ENCODE measurements at regions of chr3 and their contacts with region 1.

Region 1: GRCh38 chr3:9503283-9503682 is 50.3 kb downstream of the LHFPL4 start:
- DNase-seq: peak; percentile 74
- H3K4me3 ChIP-seq: no peak overlapping the region
- H3K27ac ChIP-seq: no peak overlapping the region
- H3K4me1 ChIP-seq: peaks cover 7% of the 10 kb centered on the region
- H3K27me3 ChIP-seq: peaks cover 8% of the 10 kb centered on the region
- CTCF ChIP-seq: peak; percentile 91

Region 2: DNA sequence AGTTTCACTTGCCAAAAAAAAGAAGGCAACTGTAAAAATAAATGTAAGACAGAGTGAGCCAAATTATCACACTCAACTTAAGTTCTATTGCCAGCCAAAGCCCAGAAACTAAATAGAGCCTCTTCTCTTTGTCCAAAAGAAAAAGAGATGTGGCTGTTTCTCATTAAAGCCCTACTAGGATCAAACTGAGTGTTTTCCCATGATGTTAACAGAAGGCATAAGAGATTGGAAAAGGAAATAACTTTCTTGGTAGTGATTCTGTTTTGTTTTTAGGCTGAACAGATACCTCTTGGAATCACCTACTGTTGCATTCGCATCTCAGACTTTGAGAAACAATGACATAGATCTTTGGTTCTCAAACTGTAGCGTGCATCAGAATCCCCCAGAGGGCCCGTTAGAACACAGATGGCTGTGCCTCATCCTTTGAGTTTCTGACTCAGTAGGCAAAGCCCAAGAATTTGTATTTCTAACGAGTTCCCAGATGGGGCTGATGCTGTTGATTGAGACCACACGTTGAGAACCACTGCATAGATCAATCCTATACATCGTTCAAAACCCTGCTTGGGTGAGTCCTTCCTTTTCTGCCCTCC is 211.4 kb before region 1 on chr3:
- CTCF ChIA-PET with region 1: no interaction called
- POLR2A ChIA-PET with region 1: no interaction called
- intact Hi-C with region 1: no loop called
- DNase-seq: no peak
- H3K4me3 ChIP-seq: no peak overlapping the region
- H3K27ac ChIP-seq: no peak overlapping the region
- H3K4me1 ChIP-seq: no peaks in the 10 kb centered on the region
- H3K27me3 ChIP-seq: peaks cover 20% of the 10 kb centered on the region
- CTCF ChIP-seq: no peak

Region 3: GRCh38 chr3:9352917-9353752 is 150.1 kb before region 1 on chr3:
- CTCF ChIA-PET with region 1: no interaction called
- POLR2A ChIA-PET with region 1: no interaction called
- intact Hi-C with region 1: loop called (anchors 1 kb)
- DNase-seq: peak; percentile 68
- H3K4me3 ChIP-seq: no peak overlapping the region
- H3K27ac ChIP-seq: no peak overlapping the region
- H3K4me1 ChIP-seq: no peaks in the 10 kb centered on the region
- H3K27me3 ChIP-seq: no peaks in the 10 kb centered on the region
- CTCF ChIP-seq: peak; percentile 91

Region 4: DNA sequence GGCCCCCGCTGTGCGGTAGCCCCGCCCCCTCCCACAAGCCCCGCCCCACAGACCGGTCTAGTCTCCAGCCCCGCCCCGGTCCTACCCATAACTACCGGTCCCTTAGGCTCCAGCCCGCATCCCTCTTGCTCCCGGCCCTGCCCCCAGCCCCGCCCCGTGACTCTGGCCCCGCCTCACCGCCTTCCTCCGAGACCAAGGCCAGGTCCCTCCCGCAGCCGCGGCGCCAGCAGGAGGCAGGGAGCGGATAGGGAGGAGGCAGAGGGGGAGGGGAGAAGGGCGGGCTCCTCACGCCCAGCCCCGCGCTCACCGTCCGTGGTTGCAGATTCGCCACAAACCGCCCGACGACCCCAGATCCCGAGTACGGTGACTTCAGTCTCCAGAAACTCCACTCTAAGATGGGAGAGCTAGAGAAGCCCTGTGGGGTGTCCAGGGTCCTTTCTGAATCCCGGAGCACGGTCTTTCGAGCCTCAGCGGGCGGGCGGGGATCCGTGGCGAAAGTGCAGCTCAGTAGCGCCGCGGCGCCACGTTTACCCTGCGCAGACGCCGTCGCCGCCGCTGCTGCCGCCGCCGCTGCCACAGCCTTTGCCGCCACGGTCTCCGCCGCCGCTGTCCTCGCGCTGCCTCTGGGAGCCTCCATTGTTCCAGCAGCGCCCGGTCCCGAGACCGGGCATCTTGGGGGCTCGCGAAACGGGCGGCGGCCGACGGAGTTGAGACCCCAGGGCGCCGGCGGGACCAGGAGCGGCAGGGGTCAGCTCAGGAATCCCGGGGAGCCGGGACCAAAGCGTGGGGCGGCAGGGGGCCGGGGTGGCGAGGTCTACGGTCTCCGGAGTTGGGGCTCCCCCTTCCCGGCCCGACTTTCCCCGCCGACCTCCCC is 228.2 kb after region 1 on chr3 and contains the start of gene BRPF1:
- CTCF ChIA-PET with region 1: no interaction called
- POLR2A ChIA-PET with region 1: no interaction called
- intact Hi-C with region 1: loop called (anchors 10 kb)
- DNase-seq: peak; percentile 100
- H3K4me3 ChIP-seq: peak within 1 kb of the TSS; percentile 100
- H3K27ac ChIP-seq: peak within 1 kb of the TSS; percentile 99
- H3K4me1 ChIP-seq: peaks cover 12% of the 10 kb centered on the region
- H3K27me3 ChIP-seq: no peaks in the 10 kb centered on the region
- CTCF ChIP-seq: no peak
- total RNA-seq, gene BRPF1: 30.7 and 32.0 TPM in 2 replicates

Region 5: DNA sequence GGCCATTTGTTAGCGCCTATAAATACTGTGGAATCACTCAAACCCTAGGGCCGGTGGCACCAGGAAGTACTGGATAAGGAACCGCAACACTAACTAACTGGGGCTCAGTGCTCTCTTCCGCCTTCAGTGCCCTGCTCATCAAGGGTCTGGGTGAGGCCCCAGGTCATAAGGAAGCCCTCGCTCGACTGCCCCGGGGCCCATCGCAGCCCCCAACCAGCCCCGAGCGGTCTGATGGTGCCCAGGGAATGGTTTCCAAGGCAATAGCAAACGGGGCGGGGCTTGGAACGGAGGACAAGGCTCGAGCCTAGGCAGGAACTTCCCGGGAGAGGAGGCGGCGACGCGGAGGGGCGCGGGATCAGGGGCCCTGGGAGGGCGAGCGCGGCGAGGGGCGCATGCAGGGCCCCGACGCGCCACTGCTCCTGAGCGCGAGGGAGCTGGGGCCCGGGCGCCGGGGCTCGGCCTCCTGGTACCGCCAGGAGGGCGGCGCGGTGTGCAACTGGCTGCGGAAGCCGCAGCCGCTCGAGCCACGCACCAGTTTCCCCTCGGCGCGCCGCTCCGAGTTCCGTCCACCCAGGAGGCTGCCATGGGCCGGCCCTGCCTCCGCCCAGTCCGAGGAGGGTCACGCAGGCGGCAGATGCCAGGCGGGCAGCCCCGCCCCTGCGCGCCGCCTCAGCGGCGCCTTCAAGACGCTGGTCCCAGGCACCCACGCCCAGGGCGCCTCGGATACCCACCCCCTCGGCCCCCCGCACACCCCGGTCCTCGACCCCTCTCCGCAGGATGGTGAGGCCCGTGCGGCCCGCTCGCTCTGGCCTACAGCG is 306.5 kb after region 1 on chr3 and contains the start of gene TTLL3:
- CTCF ChIA-PET with region 1: no interaction called
- POLR2A ChIA-PET with region 1: no interaction called
- intact Hi-C with region 1: loop called (anchors 5 kb)
- DNase-seq: peak; percentile 82
- H3K4me3 ChIP-seq: peak within 1 kb of the TSS; percentile 62
- H3K27ac ChIP-seq: peak within 1 kb of the TSS; percentile 81
- H3K4me1 ChIP-seq: peaks cover 13% of the 10 kb centered on the region
- H3K27me3 ChIP-seq: no peaks in the 10 kb centered on the region
- CTCF ChIP-seq: no peak
- total RNA-seq, gene TTLL3: 6.7 and 9.5 TPM in 2 replicates